HepG2 (cell line): ENCODE measurements at regions of chr6 and their contacts with region 1.

Region 1: GRCh38 chr6:34986845-34987246 is 97.8 kb downstream of the ANKS1A start:
- DNase-seq: peak; percentile 71
- ATAC-seq: peak; percentile 76
- H3K4me3 ChIP-seq: no peak overlapping the region
- H3K27ac ChIP-seq: no peak overlapping the region
- H3K4me1 ChIP-seq: no peaks in the 10 kb centered on the region
- H3K27me3 ChIP-seq: no peaks in the 10 kb centered on the region
- CTCF ChIP-seq: peak; percentile 89
- EP300 ChIP-seq: no peak
- POLR2A ChIP-seq: no peak
- RAD21 ChIP-seq: peak; percentile 80

Region 2: GRCh38 chr6:34425498-34426410 is 561.1 kb before region 1 on chr6 and contains the start of gene RPS10:
- CTCF ChIA-PET with region 1: no interaction called
- POLR2A ChIA-PET with region 1: no interaction called
- in situ Hi-C with region 1: no loop called
- intact Hi-C with region 1: no loop called
- DNase-seq: peak; percentile 90
- ATAC-seq: peak; percentile 93
- H3K4me3 ChIP-seq: peak within 1 kb of the TSS; percentile 74 to 98 (median 89)
- H3K27ac ChIP-seq: peak within 1 kb of the TSS; percentile 73
- H3K4me1 ChIP-seq: peaks cover 58% of the 10 kb centered on the region
- H3K27me3 ChIP-seq: peaks cover 0 to 2% of the 10 kb centered on the region in 2 experiments; a peak in 1 of 5 replicates
- CTCF ChIP-seq: peak; percentile 52
- EP300 ChIP-seq: 0 out of 4 replicates have a peak, but pooled peaks of 1 of the 2 experiments have one; percentile 38
- POLR2A ChIP-seq: peak; percentile 97 to 98
- RAD21 ChIP-seq: peak; percentile 56
- total RNA-seq, gene RPS10: 2,909 and 3,503 TPM in 2 replicates

Region 3: DNA sequence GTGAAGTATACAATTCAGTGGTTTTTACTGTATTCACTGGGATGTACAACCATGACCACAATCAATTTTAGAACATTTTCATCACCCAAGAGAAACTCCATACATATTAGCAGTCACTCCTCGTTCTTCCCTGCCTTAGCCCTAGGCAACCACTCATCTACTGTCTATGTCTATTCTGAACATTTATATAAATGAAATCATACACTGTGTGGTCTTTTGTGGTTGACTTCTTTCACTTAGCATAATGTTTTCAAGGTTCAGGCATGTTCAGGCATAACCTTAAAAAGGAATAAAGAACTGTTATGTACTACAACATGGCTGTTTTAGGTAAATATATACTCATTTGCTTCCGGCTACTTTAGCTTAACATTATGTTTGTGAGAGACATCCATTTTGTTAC is 157.7 kb before region 1 on chr6:
- CTCF ChIA-PET with region 1: no interaction called
- POLR2A ChIA-PET with region 1: no interaction called
- in situ Hi-C with region 1: no loop called
- intact Hi-C with region 1: no loop called
- DNase-seq: no peak
- ATAC-seq: no peak
- H3K4me3 ChIP-seq: no peak overlapping the region
- H3K27ac ChIP-seq: no peak overlapping the region
- H3K4me1 ChIP-seq: no peaks in the 10 kb centered on the region
- H3K27me3 ChIP-seq: no peaks in the 10 kb centered on the region
- CTCF ChIP-seq: no peak
- EP300 ChIP-seq: no peak
- POLR2A ChIP-seq: no peak
- RAD21 ChIP-seq: no peak

Region 4: DNA sequence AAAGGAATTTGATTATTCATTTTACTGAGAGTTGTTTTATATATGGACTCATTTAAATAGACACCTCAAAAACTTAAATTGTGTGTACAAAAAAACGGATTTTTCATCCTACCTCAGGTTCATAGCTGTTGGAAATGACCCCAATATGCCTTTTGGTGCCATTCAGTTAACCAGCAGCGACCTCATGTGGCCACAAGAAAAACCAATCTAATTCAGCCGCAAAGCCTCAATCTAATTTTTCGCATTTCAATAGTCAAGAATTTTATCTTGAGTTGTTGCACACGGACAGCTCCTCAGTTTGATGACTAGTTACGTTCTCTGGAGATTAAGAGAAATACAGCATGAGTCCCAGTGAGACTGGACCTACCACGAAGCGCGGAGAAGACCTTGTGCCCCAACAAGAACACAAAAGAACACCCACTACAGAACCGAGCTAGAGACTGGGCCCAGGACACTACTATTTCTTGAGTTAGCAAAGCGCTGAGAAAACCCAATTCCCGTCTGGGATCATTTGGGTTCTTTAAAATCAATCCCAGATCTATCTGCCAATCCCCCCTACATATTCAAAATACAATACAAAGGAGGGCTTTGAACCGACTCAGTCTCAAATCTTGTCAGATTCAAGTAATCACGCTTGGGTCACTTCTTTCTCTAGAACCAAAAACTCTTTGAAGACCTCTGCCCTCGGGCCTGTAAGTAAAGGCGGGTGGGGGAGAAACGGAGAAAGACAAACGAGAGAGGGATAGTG is 153.2 kb after region 1 on chr6:
- CTCF ChIA-PET with region 1: interaction called, 44 read pairs
- POLR2A ChIA-PET with region 1: no interaction called
- in situ Hi-C with region 1: loop called (anchors 5 kb)
- intact Hi-C with region 1: loop called (anchors 1 kb)
- DNase-seq: peak; percentile 64
- ATAC-seq: peak; percentile 50
- H3K4me3 ChIP-seq: peak overlapping the region in 1 of 3 experiments; percentile 31; a peak in 2 of 6 replicates
- H3K27ac ChIP-seq: no peak overlapping the region
- H3K4me1 ChIP-seq: peaks cover 36% of the 10 kb centered on the region
- H3K27me3 ChIP-seq: peaks cover 0 to 5% of the 10 kb centered on the region in 2 experiments; a peak in 1 of 5 replicates
- CTCF ChIP-seq: peak; percentile 92
- EP300 ChIP-seq: no peak
- POLR2A ChIP-seq: no peak
- RAD21 ChIP-seq: peak; percentile 90

Region 5: DNA sequence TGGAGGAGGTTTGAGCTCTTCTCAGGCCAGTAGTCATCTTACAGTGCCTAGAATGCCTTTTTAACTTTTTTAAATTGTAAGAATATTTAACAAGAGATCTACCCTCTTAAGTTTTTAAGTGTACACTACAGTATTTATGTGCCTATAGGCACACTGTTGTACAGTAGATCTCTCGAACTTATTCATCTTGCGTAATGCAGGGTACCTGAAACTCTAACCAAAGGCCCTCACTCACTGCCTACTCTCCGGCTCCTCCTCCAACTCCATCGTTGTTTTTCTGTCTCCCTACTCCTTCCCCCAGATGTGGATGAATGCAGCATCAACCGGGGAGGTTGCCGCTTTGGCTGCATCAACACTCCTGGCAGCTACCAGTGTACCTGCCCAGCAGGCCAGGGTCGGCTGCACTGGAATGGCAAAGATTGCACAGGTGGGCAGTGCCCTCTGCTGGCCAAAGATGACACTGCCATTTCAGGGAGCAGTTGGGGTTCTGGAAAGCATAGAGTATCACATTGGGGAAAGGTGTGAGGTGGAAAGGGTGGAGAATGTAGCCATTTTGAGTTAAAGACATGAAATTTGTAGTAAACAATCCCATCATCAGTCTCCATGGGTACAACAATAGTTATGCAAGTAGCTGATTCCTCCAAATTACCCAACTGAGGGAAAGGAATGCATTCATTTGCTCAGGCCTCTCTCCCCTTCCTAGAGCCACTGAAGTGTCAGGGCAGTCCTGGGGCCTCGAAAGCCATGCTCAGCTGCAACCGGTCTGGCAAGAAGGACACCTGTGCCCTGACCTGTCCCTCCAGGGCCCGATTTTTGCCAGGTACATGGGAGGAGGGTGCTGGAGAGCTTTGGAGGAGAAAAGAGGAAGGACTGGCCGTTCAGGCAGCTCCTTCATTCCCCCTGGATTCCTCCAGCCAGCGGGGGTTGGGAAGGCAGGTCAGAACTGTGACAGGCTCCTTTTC is 254.3 kb after region 1 on chr6:
- CTCF ChIA-PET with region 1: interaction called, 17 read pairs
- POLR2A ChIA-PET with region 1: no interaction called
- in situ Hi-C with region 1: loop called (anchors 5 kb)
- intact Hi-C with region 1: loop called (anchors 1 kb)
- DNase-seq: peak; percentile 59
- ATAC-seq: peak; percentile 93
- H3K4me3 ChIP-seq: no peak overlapping the region
- H3K27ac ChIP-seq: no peak overlapping the region
- H3K4me1 ChIP-seq: no peaks in the 10 kb centered on the region
- H3K27me3 ChIP-seq: no peaks in the 10 kb centered on the region
- CTCF ChIP-seq: peak; percentile 99
- EP300 ChIP-seq: no peak
- POLR2A ChIP-seq: no peak
- RAD21 ChIP-seq: peak; percentile 97